ENCODE measurements at regions of chr12 and their contacts with region 1.

Region 1: GRCh38 chr12:120265473-120266179 is at the start of gene PXN:
- DNase-seq: peak; percentile 84 to 94 (median 92)
- H3K4me3 ChIP-seq: peak within 1 kb of the TSS; percentile 100
- H3K27ac ChIP-seq: peak within 1 kb of the TSS; percentile 4 to 53
- H3K4me1 ChIP-seq: peaks cover 19% of the 10 kb centered on the region
- H3K27me3 ChIP-seq: no peaks in the 10 kb centered on the region
- CTCF ChIP-seq: peak; percentile 76 to 87 (median 85)
- EP300 ChIP-seq: no peak
- POLR2A ChIP-seq: peak; percentile 51
- total RNA-seq, gene PXN: 25.0 to 78.0 (median 44.7) TPM

Region 2: DNA sequence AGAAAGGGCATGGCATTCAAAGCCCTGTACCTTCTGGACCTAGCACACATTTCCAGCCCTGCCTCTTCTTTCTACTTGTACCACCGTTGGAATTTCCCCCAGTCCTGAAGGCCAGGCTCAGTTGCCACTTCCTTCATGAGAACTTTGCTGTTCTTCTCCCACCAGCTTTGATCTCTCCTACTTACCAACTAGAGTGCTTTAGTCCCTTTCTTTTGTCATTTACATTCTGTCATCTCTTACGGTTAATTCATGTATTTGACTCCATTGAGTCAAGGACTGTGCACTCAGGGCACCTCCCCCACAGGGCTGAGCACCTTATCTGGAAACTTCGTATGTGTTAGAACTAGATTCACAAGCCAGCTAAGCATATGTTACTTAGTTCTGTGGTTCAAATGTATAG is 250.3 kb before region 1 on chr12:
- intact Hi-C with region 1: no loop called
- DNase-seq: no peak
- H3K4me3 ChIP-seq: no peak overlapping the region
- H3K27ac ChIP-seq: no peak overlapping the region
- H3K4me1 ChIP-seq: no peaks in the 10 kb centered on the region
- H3K27me3 ChIP-seq: no peaks in the 10 kb centered on the region
- CTCF ChIP-seq: no peak
- EP300 ChIP-seq: no peak
- POLR2A ChIP-seq: no peak

Region 3: GRCh38 chr12:120041386-120042231 is 224.0 kb before region 1 on chr12:
- intact Hi-C with region 1: no loop called
- DNase-seq: no peak
- H3K4me3 ChIP-seq: no peak overlapping the region
- H3K27ac ChIP-seq: no peak overlapping the region
- H3K4me1 ChIP-seq: no peaks in the 10 kb centered on the region
- H3K27me3 ChIP-seq: no peaks in the 10 kb centered on the region
- CTCF ChIP-seq: no peak
- EP300 ChIP-seq: no peak
- POLR2A ChIP-seq: no peak

Region 4: GRCh38 chr12:120216742-120217605 is 48.7 kb before region 1 on chr12:
- intact Hi-C with region 1: no loop called
- DNase-seq: no peak
- H3K4me3 ChIP-seq: no peak overlapping the region
- H3K27ac ChIP-seq: no peak overlapping the region
- H3K4me1 ChIP-seq: no peaks in the 10 kb centered on the region
- H3K27me3 ChIP-seq: no peaks in the 10 kb centered on the region
- CTCF ChIP-seq: no peak
- EP300 ChIP-seq: no peak
- POLR2A ChIP-seq: no peak

Region 5: GRCh38 chr12:120228291-120229070 is 37.1 kb before region 1 on chr12:
- intact Hi-C with region 1: loop called (anchors 1 to 2 kb)
- DNase-seq: peak; percentile 86 to 91 (median 91)
- H3K4me3 ChIP-seq: no peak overlapping the region
- H3K27ac ChIP-seq: no peak overlapping the region
- H3K4me1 ChIP-seq: peaks cover 38% of the 10 kb centered on the region
- H3K27me3 ChIP-seq: no peaks in the 10 kb centered on the region
- CTCF ChIP-seq: peak; percentile 95 to 97 (median 96)
- EP300 ChIP-seq: no peak
- POLR2A ChIP-seq: no peak